ENCODE measurements at regions of chr12 and their contacts with region 1.

Region 1: GRCh38 chr12:54324617-54325441 is at the start of gene COPZ1:
- DNase-seq: peak; percentile 77
- ATAC-seq: peak; percentile 95
- H3K4me3 Mint-ChIP-seq: peak within 1 kb of the TSS; percentile 97
- H3K27ac Mint-ChIP-seq: peak within 1 kb of the TSS; percentile 97
- H3K4me1 Mint-ChIP-seq: peaks cover 31% of the 10 kb centered on the region
- H3K27me3 Mint-ChIP-seq: no peaks in the 10 kb centered on the region
- CTCF ChIP-seq: no peak
- total RNA-seq, gene COPZ1: 120 and 124 TPM in 2 replicates

Region 2: GRCh38 chr12:54220092-54220557 is 104.7 kb before region 1 on chr12:
- CTCF ChIA-PET with region 1: interaction called, 10 read pairs
- POLR2A ChIA-PET with region 1: no interaction called
- intact Hi-C with region 1: loop called (anchors 1 kb)
- DNase-seq: peak; percentile 58
- ATAC-seq: peak; percentile 49
- H3K4me3 Mint-ChIP-seq: no peak overlapping the region
- H3K27ac Mint-ChIP-seq: no peak overlapping the region
- H3K4me1 Mint-ChIP-seq: peaks cover 35% of the 10 kb centered on the region
- H3K27me3 Mint-ChIP-seq: no peaks in the 10 kb centered on the region
- CTCF ChIP-seq: no peak

Region 3: DNA sequence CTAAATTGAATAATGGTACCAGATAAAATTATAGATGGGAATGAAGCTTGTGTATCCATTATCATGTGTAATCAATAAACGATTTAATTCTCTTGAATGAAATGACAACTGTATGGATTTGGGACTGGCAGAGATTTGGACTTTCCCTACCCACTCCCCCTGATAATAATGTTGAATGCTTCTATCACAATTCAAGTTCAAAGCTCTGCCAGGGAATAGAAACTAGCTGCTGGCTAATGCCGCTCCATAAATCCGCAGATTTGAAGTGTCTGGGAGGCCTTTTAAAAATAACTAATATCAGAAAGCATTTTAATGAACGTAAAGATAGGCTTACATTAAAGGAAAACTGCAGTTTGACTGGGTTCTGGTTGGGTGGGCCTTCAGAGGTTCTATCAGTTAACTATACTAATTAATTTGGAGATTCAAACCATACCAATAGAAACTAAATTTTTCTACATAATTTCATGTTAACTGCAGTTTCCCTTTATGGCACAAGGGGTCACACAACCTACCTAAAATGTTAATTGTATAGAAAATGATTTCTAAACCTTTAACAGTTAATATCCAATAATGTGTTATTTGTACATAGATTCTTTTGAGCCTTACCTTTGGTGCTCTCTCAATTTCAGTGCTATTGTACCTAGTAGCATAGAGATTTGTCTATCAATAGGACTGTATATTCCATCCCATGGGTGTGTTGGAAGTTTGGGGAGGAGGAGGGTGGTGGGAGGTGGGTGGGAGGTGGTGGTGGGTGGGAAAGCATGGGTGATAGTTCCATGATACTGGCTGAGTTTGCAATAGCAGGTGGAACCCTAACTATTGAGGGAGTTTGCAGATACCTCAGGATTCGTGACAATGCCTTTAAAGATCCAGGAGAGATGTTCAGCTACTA is 39.4 kb before region 1 on chr12:
- CTCF ChIA-PET with region 1: interaction called, 8 read pairs
- POLR2A ChIA-PET with region 1: interaction called, 50 read pairs
- intact Hi-C with region 1: loop called (anchors 1 kb)
- DNase-seq: no peak
- ATAC-seq: no peak
- H3K4me3 Mint-ChIP-seq: peak overlapping the region; percentile 7
- H3K27ac Mint-ChIP-seq: no peak overlapping the region
- H3K4me1 Mint-ChIP-seq: peaks cover 73% of the 10 kb centered on the region
- H3K27me3 Mint-ChIP-seq: no peaks in the 10 kb centered on the region
- CTCF ChIP-seq: no peak

Region 4: GRCh38 chr12:54304187-54304810 is 20.5 kb before region 1 on chr12:
- CTCF ChIA-PET with region 1: interaction called, 6 read pairs
- POLR2A ChIA-PET with region 1: interaction called, 4 read pairs
- intact Hi-C with region 1: loop called (anchors 2 kb)
- DNase-seq: peak; percentile 54
- ATAC-seq: peak; percentile 94
- H3K4me3 Mint-ChIP-seq: peak overlapping the region; percentile 69
- H3K27ac Mint-ChIP-seq: no peak overlapping the region
- H3K4me1 Mint-ChIP-seq: peaks cover 36% of the 10 kb centered on the region
- H3K27me3 Mint-ChIP-seq: peaks cover 37% of the 10 kb centered on the region
- CTCF ChIP-seq: no peak

Region 5: DNA sequence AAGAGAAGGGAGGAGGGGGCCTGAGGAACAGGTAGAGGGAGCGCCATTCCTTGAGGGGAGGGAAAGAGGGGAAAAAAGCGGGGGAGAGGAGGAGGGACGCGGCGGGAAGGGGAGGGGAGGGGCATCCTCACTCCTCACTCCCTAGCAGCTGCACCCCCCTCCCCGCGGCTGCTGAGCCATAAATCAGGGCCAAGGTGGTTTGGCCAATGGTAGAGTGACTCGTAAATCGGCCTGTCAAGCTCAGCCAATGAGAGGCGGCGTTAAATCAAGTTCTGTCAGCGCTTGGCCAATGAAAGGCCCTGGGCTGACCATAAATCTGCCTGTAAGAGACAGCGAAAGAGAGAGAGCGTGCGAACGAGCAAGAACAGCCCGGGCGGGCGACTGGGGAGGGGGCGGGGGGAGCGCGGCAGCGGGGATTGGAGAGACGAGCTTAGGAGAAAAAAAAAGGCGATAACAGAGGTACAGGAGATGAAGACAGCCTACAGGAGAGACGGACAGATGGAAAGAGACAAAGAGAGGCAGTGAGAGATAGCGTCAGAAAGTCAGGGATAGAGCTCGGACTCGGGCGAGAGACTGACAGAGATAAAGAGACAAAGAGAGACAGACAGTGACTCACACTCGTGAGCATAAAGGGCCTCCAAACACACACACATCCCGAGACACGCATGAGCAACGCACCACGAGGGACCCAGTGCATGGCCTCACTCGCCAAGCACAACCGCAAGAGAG is 34.4 kb after region 1 on chr12:
- CTCF ChIA-PET with region 1: interaction called, 6 read pairs
- POLR2A ChIA-PET with region 1: interaction called, 22 read pairs
- intact Hi-C with region 1: loop called (anchors 1 kb)
- DNase-seq: peak; percentile 71
- ATAC-seq: peak; percentile 97
- H3K4me3 Mint-ChIP-seq: no peak overlapping the region
- H3K27ac Mint-ChIP-seq: no peak overlapping the region
- H3K4me1 Mint-ChIP-seq: peaks cover 11% of the 10 kb centered on the region
- H3K27me3 Mint-ChIP-seq: no peaks in the 10 kb centered on the region
- CTCF ChIP-seq: no peak